Cardiac septum (tissue), 1 donor: ENCODE measurements at regions of chr6 and their contacts with region 1.

Region 1: GRCh38 chr6:150079604-150080003 is 10.7 kb upstream of the ULBP3 start:
- DNase-seq: no peak

Region 2: DNA sequence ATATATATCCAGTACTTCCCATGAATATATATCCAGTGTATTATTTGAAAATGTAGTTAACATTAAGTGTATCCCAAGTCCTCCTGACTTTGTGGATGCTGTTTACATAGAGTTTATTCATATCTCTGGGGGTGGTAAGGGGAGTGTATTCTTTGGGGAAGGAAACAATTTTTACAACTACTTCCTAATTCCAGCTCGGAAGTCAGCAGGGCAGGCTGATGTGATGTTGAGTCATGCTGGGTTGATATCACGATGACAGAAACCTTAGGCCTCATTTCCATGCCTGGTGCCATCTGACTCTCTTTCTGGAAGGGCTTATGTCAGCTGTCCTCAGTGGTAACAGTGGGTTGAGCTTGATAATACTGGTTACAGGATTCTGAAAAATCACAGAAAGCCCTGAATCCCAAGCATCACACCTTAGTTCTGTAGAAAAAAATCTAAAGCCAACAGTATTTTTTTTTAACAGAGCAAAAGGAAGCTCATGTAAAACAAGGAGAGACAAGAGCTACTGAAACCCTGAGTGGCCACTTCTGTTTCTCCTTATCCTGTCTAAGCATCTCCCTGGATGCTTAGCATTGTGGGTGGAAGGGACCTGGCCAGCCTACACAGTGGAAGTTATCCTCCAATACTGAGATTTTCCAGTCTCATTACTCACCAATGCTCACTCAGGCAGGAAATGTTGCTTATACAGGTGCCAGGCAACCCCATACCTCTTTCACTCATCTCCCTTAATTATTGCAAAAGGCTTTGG is 214.0 kb after region 1 on chr6:
- intact Hi-C with region 1: no loop called
- DNase-seq: no peak

Region 3: GRCh38 chr6:150334790-150335783 is 255.5 kb after region 1 on chr6:
- intact Hi-C with region 1: loop called (anchors 1 kb)
- DNase-seq: peak; percentile 35

Region 4: GRCh38 chr6:150395398-150396009 is 315.9 kb after region 1 on chr6:
- intact Hi-C with region 1: loop called (anchors 2 kb)
- DNase-seq: no peak

Region 5: DNA sequence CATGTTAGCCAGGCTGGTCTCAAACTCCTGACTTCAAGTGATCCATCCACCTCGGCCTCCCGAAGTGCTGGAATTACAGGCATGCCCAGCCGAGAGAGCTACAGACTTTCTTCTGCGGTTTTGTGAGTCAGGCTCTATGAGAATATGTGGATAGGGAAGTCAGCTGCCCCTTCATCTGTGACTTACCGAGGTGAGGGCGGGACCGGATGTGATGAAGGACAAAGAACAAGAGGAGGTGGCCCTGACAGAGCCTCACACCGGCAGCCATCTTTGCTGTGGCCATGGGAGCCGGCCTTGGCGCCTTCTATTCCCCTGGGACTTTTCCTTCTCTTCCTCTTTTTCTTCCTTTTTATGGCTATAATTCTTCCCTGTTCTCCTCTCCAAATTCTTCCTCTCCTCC is 356.2 kb after region 1 on chr6:
- intact Hi-C with region 1: no loop called
- DNase-seq: no peak